ENCODE measurements at regions of chr21 and their contacts with region 1.

Region 1: GRCh38 chr21:17387030-17387617 is 125.7 kb upstream of the CXADR start:
- DNase-seq: peak in 2 of 10 donors; percentile 28 to 35
- H3K4me3 ChIP-seq: no peak overlapping the region
- H3K27ac ChIP-seq: peak overlapping the region in 2 of 59 donors; percentile 5 to 18
- H3K27me3 ChIP-seq: no peaks in the 10 kb centered on the region
- CTCF ChIP-seq: peak; percentile 81 to 100 (median 90)

Region 2: DNA sequence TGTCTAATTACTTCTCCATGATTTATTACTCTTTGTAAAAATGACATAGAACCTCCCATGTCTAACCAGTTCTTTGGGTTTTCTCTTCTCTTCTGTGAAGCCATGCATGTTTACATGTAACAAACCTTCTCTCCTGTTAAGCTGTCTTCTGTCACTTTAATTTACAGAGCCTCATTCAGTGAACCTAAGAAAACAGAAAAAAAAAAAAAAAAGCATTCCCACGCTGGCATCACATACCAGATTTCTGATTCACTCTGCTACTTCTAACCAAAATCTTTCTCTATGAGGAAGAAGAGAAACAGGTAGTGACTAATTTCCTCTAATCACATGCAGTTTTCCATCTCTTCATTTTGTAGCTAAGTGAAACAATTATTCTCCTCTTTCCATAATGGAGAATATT is 15.7 kb before region 1 on chr21:
- intact Hi-C with region 1: no loop called
- DNase-seq: no peak
- H3K4me3 ChIP-seq: no peak overlapping the region
- H3K27ac ChIP-seq: no peak overlapping the region
- H3K27me3 ChIP-seq: peaks cover 0 to 5% (median 0%) of the 10 kb centered on the region in 45 donors
- CTCF ChIP-seq: no peak

Region 3: DNA sequence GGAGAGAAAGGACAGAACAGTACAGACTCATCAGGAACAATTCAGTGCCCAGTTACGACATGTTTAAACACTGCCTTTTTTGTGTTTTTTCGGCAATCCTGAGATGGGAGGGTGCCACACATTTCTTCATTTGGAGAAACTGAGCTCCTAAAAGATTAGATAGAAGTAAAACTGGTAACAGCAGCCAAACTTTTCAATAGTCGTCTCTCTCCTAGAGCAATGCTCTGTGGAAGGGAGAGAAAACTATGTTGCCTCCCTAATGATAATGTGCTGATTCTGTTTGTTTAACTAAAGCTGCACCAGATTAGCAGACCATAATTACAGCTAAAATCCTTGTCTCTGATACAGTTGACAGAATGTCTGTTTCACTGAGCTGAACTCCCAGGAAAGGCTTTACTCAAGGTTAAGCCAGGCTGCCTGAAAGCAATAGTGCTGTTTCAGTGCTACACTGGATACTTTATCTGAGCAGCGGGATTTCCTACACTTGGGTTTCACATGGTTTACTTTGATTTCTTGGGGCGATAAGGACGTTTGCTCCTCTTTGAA is 49.6 kb after region 1 on chr21:
- intact Hi-C with region 1: no loop called
- DNase-seq: no peak
- H3K4me3 ChIP-seq: no peak overlapping the region
- H3K27ac ChIP-seq: peak overlapping the region in 56 of 59 donors; percentile 8 to 91 (median 78)
- H3K27me3 ChIP-seq: no peaks in the 10 kb centered on the region
- CTCF ChIP-seq: no peak

Region 4: GRCh38 chr21:17491716-17492414 is 104.7 kb after region 1 on chr21:
- intact Hi-C with region 1: no loop called
- DNase-seq: no peak
- H3K4me3 ChIP-seq: no peak overlapping the region
- H3K27ac ChIP-seq: no peak overlapping the region
- H3K27me3 ChIP-seq: no peaks in the 10 kb centered on the region
- CTCF ChIP-seq: no peak

Region 5: DNA sequence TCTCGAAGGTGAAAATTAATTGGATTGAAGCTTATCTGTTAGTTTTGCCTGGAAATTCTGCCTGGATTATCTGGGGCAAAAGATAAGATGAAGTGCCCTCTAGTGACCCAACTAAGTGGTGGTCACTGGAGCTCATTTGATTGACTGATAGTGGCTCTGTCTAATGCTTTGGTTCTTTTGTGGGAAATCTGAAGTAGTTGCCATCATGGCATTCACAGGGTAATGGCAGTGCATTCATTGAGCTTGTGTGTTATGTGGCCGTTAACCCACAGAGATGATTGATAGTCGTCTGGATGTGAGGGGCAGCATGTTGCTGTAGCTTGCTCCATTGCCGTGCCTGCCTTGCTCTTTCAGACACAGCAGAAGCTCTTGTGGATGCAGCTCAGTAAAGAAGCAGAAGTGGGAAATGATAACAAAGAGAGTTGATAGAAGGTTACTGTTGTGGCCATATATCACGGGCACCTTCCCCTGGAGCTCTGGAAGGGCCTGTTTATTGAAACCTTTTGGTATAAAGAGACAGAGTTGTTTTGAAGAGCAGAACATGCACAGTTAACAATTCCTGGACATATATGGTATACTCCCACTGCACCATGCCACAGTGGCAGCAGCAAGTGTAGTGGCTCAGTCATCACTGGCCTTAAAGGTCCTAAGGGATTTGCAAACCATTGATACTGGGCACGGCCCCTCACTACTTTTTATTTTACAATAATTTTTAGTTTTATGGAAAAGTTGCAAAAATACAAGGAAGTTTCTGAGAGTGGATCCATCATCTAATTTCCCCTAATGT is 167.7 kb after region 1 on chr21:
- intact Hi-C with region 1: loop called (anchors 1 to 10 kb)
- DNase-seq: no peak
- H3K4me3 ChIP-seq: peak overlapping the region in 14 of 59 donors; percentile 4 to 44 (median 22)
- H3K27ac ChIP-seq: peak overlapping the region in 48 of 59 donors; percentile 20 to 81 (median 63)
- H3K27me3 ChIP-seq: no peaks in the 10 kb centered on the region
- CTCF ChIP-seq: peak; percentile 13 to 85 (median 62)

Region 6: GRCh38 chr21:17585875-17586450 is 198.8 kb after region 1 on chr21:
- intact Hi-C with region 1: loop called (anchors 5 to 10 kb)
- DNase-seq: no peak
- H3K4me3 ChIP-seq: no peak overlapping the region
- H3K27ac ChIP-seq: no peak overlapping the region
- H3K27me3 ChIP-seq: no peaks in the 10 kb centered on the region
- CTCF ChIP-seq: peak; percentile 37 to 88 (median 71)